ENCODE measurements at regions of chr16 and their contacts with region 1.

Region 1: GRCh38 chr16:84970447-84971127 is 40.7 kb downstream of the ZDHHC7 start:
- DNase-seq: peak; percentile 94
- ATAC-seq: peak; percentile 78

Region 2: DNA sequence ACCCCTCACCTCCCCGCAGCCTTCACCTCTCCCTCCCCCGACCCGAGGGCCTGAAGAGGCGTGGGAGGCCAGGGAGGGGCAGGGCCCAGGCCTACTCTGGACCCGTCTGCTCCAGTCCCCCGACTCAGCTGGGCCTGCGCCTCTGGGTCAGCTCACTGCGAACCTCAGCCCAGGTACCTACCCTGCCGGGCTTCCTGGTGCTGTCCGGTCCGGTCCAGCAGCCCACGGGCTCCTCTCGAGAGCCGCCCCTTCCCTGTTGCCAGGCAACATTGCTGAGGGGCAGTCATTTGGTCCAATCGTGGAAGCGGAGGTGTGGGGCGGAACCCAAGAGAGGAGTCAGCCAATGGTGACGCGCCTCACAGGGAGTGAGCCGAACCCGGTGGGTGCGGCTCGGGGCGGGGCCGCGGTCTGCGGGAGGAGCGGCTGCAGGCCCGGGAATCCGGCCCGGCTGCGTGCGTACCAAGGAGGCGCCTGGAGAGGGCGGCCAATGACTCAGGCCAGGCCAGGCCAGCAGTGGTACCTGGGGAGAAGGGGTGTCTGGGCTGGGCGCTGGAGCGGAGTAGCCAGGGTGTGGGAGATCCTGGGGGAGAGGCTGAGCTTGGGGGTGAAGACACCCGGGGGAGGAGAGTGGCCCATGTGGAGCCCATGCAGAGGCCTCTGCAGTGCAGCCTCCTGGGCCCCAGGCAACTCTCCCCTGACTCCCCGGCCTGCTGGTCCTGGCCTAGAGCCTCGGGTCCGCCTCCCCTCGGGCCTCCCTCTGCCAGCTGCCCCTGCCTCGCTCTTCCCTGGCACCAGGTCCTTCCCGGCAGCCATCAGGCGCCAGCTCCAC is 466.0 kb before region 1 on chr16 and contains the start of gene MEAK7:
- intact Hi-C with region 1: loop called (anchors 10 kb)
- DNase-seq: peak; percentile 99
- ATAC-seq: peak; percentile 98
- total RNA-seq, gene MEAK7: 7.4 TPM

Region 3: GRCh38 chr16:84569382-84569987 is 401.1 kb before region 1 on chr16:
- intact Hi-C with region 1: no loop called
- DNase-seq: no peak
- ATAC-seq: peak; percentile 26

Region 4: GRCh38 chr16:85046931-85047866 is 76.6 kb after region 1 on chr16:
- intact Hi-C with region 1: no loop called
- DNase-seq: no peak
- ATAC-seq: peak; percentile 38